Activated naive CD8-positive, alpha-beta T cell treated with anti-CD3 and anti-CD28 coated beads, Interleukin-2, amount 10 ng/mL, durations not matched to agents 7 days and 5 days (primary cell): ENCODE measurements at regions of chr12 and their contacts with region 1.

Region 1: DNA sequence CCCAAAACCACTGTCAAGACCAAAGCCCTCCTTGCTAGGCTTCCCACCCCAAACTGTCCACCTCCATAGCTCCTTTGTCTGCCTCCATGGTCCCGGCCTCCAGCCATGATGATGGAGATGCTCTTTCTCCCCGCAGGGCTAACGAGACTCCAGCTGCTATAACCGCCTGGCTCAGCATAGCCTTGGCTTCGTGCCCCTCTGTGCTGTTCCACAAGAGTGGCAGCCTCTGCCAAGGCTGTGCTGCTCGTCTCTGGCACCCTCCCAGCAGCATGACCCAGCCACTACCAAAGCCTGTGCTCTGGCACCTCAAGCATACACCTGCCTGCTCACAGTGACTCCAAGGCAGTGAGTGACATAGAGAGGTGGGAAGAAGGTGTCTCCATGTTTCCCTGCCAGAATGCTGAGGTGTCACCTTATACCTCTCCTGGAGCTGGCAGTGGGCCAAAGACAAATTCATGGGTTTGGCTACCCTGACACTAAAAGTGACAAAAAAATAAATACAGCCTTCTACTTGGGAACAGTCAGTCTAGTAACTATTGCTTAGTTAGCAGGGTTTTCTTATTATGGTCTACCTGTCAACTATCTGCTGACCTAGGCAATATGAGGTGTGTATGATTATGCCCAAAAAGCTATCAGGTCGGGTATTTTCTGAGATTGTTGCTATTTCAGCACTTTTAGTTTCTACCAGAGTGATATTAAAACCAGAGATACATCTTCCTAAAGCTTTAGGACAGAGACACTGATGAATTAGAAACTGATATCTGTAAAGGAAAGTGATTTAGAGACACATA is 16.1 kb upstream of the KRT73 start:
- DNase-seq: peak; percentile 24
- ATAC-seq: no peak
- H3K4me3 Mint-ChIP-seq: no peak overlapping the region
- H3K27ac Mint-ChIP-seq: peak overlapping the region; percentile 58
- H3K4me1 Mint-ChIP-seq: peaks cover 43% of the 10 kb centered on the region
- H3K27me3 Mint-ChIP-seq: peaks cover 4% of the 10 kb centered on the region

Region 2: DNA sequence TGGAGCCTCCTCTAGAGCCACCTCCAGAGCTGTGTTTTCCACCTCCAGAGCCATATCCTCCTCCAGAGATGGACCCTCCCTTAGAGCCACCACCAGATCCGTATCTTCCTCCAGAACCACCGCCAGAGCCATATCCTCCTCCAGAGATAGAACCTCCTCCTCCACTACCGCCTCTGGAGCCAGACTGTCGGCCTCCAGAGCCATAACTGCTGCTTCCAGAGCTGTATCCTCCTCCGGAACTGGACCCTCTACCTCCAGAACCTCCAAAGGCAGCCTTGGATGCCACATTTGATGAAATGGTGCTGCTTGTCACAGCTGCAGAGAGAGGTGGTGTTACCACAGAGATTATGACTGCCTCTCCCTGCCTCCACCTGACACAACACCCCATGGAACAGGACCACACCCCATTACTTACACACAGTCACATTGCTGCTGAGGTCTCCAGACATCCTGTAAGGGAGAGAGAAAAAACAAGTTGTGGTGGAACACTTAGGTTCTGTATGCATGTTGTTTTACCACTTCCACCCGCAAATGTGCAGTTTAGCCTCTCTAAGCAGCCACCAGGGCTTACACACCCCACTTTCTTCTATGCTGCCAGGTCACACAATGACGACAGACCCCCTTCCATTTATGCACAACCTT is 10.8 kb after region 1 on chr12:
- POLR2A ChIA-PET with region 1: interaction called, 10 read pairs
- DNase-seq: peak; percentile 56
- ATAC-seq: peak; percentile 97
- H3K4me3 Mint-ChIP-seq: peak overlapping the region; percentile 60
- H3K27ac Mint-ChIP-seq: peak overlapping the region; percentile 94
- H3K4me1 Mint-ChIP-seq: peaks cover 50% of the 10 kb centered on the region
- H3K27me3 Mint-ChIP-seq: no peaks in the 10 kb centered on the region

Region 3: DNA sequence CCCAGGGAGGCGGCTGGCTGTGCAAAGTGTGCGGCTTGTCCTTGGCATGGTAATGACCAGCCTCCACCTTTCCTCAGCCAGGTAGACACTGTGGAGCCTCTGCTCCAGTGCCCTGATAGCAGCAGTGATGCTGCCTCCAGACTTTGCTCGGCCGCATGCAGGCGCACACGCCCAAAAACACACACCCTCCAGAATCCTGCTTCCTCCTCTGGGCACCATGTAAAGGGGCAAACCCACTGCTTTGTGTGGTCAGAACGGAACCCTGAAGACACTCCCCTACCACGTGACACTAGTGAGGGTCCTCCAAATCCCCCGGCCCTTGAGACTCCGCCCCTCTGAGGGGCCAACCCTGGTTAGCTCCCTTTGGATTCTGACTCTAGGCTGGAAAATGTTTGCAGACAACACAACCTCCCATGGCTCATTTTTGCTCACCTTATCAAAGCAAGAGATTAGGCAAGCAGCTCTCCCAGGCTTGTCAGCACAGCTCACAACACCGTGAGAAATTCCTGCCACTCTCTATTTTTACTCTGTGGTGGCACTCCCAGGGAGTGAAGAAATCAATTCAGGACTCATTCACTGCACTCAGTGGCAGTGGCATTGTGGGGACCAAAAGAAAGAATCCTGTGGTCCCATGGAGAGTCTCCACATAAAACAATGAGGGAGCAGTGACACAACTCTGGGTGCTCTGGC is 64.3 kb after region 1 on chr12:
- POLR2A ChIA-PET with region 1: no interaction called
- DNase-seq: no peak
- ATAC-seq: no peak
- H3K4me3 Mint-ChIP-seq: no peak overlapping the region
- H3K27ac Mint-ChIP-seq: no peak overlapping the region
- H3K4me1 Mint-ChIP-seq: peaks cover under 1% of the 10 kb centered on the region
- H3K27me3 Mint-ChIP-seq: peaks cover 20% of the 10 kb centered on the region